Aorta (tissue), 5 donors: ENCODE measurements at regions of chr15 and their contacts with region 1.

Region 1: GRCh38 chr15:78709263-78709882 is 68.4 kb upstream of the CHRNB4 start:
- DNase-seq: peak; percentile 71 to 90
- ATAC-seq: peak; percentile 92
- H3K4me3 ChIP-seq: no peak overlapping the region
- H3K27ac ChIP-seq: no peak overlapping the region
- H3K4me1 ChIP-seq: no peaks in the 10 kb centered on the region
- H3K27me3 ChIP-seq: no peaks in the 10 kb centered on the region

Region 2: GRCh38 chr15:78618490-78618934 is 90.9 kb before region 1 on chr15:
- intact Hi-C with region 1: loop called (anchors 1 to 2 kb)
- DNase-seq: peak; percentile 89 to 92
- ATAC-seq: peak; percentile 75
- H3K4me3 ChIP-seq: no peak overlapping the region
- H3K27ac ChIP-seq: no peak overlapping the region
- H3K4me1 ChIP-seq: no peaks in the 10 kb centered on the region
- H3K27me3 ChIP-seq: no peaks in the 10 kb centered on the region

Region 3: GRCh38 chr15:80503319-80503952 is 1794.1 kb after region 1 on chr15:
- intact Hi-C with region 1: loop called in 1 of 2 experiments (anchors 5 kb)
- DNase-seq: no peak
- ATAC-seq: no peak
- H3K4me3 ChIP-seq: no peak overlapping the region
- H3K27ac ChIP-seq: no peak overlapping the region
- H3K4me1 ChIP-seq: no peaks in the 10 kb centered on the region
- H3K27me3 ChIP-seq: no peaks in the 10 kb centered on the region